ENCODE measurements at regions of chr1 and their contacts with region 1.

Region 1: GRCh38 chr1:211830330-211831142 is at the start of gene LPGAT1:
- DNase-seq: no peak
- H3K4me3 ChIP-seq: peak within 1 kb of the TSS; percentile 69
- H3K27ac ChIP-seq: no peak within 1 kb of the TSS
- H3K27me3 ChIP-seq: peaks cover 3% of the 10 kb centered on the region
- CTCF ChIP-seq: peak; percentile 50
- polyA plus RNA-seq, gene LPGAT1: 14.2 and 16.5 TPM in 2 replicates

Region 2: DNA sequence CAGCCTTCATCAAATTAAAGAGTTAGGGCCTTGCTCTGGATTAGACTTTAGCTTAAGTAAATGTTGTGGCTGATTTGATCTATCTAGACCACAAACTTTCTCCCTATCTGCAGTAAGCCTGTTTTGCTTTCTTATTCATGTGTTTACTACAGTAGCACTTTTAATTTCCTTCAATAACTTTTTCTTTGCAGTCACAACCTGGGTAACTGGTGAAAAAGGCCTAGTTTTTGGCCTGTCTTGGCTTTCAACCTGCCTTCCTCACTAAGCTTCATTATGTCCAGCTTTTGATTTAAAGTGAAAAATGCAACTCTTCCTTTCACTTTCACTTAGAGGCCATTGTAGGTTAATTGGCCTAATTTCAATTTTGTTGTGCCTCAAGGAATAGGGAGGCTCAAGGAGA is 12.5 kb after region 1 on chr1:
- CTCF ChIA-PET with region 1: no interaction called
- POLR2A ChIA-PET with region 1: interaction called, 11 read pairs
- DNase-seq: no peak
- H3K4me3 ChIP-seq: no peak overlapping the region
- H3K27ac ChIP-seq: no peak overlapping the region
- H3K27me3 ChIP-seq: peaks cover 5% of the 10 kb centered on the region
- CTCF ChIP-seq: no peak

Region 3: GRCh38 chr1:211859405-211859804 is 28.9 kb after region 1 on chr1:
- CTCF ChIA-PET with region 1: no interaction called
- POLR2A ChIA-PET with region 1: no interaction called
- DNase-seq: no peak
- H3K4me3 ChIP-seq: no peak overlapping the region
- H3K27ac ChIP-seq: no peak overlapping the region
- H3K27me3 ChIP-seq: no peaks in the 10 kb centered on the region
- CTCF ChIP-seq: no peak